Activated CD8-positive, alpha-beta memory T cell treated with anti-CD3 and anti-CD28 coated beads, Interleukin-2, amount 10 ng/mL, durations not matched to agents 7 days and 5 days (primary cell): ENCODE measurements at regions of chr13 and their contacts with region 1.

Region 1: GRCh38 chr13:114143806-114144605 is 11.6 kb upstream of the RASA3 start:
- DNase-seq: no peak
- ATAC-seq: no peak
- H3K4me3 Mint-ChIP-seq: no peak overlapping the region
- H3K27ac Mint-ChIP-seq: no peak overlapping the region
- H3K4me1 Mint-ChIP-seq: peaks cover 40% of the 10 kb centered on the region
- H3K27me3 Mint-ChIP-seq: peaks cover 32% of the 10 kb centered on the region

Region 2: GRCh38 chr13:114130837-114131582 is 13.0 kb before region 1 on chr13:
- CTCF ChIA-PET with region 1: interaction called, 10 read pairs
- DNase-seq: peak; percentile 88
- ATAC-seq: peak; percentile 43
- H3K4me3 Mint-ChIP-seq: peak overlapping the region; percentile 90
- H3K27ac Mint-ChIP-seq: peak overlapping the region; percentile 84
- H3K4me1 Mint-ChIP-seq: peaks cover 65% of the 10 kb centered on the region
- H3K27me3 Mint-ChIP-seq: peaks cover 16% of the 10 kb centered on the region

Region 3: DNA sequence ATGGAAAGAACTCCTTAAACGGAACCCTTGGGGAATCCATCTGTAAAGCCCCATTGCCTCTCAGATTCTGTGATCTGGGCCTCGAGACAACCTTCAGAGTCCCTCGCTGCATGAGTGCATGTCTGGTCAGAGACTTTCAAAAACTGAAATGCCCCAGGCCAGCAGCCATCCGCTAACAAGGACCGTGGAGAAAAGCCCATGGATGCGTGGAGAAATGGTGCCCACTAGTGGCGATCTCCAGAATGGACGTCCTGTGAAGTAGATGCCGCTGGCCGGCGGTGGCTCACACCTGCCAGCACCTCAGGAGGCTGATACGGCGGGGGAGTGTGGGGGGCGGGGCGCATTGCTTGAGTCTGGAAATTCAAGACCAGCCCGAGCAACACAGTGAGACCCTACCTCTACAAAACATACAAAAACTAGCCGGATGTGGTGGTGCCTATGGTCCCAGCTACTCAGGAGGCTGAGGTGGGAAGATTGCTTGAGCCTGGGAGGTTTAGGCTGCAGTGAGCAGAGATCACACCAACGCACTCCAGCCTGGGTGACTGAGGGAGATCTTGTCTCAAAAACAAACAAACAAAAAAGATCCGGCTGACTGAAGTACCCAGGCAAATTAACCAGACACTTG is 82.8 kb after region 1 on chr13:
- CTCF ChIA-PET with region 1: interaction called, 10 read pairs
- DNase-seq: peak; percentile 88
- ATAC-seq: peak; percentile 92
- H3K4me3 Mint-ChIP-seq: no peak overlapping the region
- H3K27ac Mint-ChIP-seq: no peak overlapping the region
- H3K4me1 Mint-ChIP-seq: peaks cover 18% of the 10 kb centered on the region
- H3K27me3 Mint-ChIP-seq: peaks cover 15% of the 10 kb centered on the region